SK-N-SH (cell line): ENCODE measurements at regions of chr16 and their contacts with region 1.

Region 1: GRCh38 chr16:27779641-27780164 is 229.8 kb downstream of the KATNIP start:
- DNase-seq: peak; percentile 93
- H3K4me3 ChIP-seq: no peak overlapping the region
- H3K27ac ChIP-seq: peak overlapping the region in 1 of 2 experiments; percentile 34; a peak in 2 of 4 replicates
- H3K4me1 ChIP-seq: peaks cover 0 to 37% of the 10 kb centered on the region in 2 experiments; a peak in 1 of 4 replicates
- H3K27me3 ChIP-seq: no peaks in the 10 kb centered on the region
- CTCF ChIP-seq: peak; percentile 54
- EP300 ChIP-seq: no peak
- RAD21 ChIP-seq: peak; percentile 75

Region 2: DNA sequence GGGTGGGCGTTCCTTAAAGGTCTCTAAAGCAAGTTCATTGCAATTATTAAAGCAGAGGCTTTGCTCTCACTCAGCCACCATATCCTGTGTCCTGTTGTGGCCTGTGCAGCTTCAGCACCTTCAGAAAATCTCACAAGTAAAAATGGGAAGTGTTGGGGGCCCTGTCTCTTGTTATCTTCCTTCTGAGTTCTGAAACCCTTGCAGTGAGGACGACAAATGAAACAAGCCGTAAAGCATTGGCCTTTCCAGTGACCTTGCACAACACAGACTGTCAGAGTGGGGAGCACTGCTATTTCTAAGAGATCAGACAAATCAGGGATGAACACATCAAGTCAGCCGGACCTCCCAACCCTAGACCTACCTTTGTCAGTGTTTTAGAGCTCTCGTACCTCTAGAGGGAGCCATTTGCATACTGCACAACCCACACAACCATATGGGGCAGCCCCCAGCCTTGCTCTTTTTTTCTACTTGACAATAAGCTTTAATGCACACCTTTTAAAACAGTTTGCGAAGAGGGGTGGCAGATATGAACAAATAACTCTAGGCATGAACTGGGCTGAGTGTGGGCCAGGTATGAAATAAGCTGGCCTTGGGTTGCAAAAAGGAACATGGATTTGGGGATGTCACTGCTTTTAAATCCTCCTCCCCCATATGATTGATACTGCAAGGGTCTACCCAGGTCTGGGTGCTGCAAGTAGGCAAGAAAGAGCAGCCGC is 140.0 kb before region 1 on chr16:
- CTCF ChIA-PET with region 1: interaction called, 25 read pairs
- POLR2A ChIA-PET with region 1: no interaction called
- DNase-seq: peak; percentile 83
- H3K4me3 ChIP-seq: no peak overlapping the region
- H3K27ac ChIP-seq: no peak overlapping the region
- H3K4me1 ChIP-seq: peaks cover 0 to 9% of the 10 kb centered on the region in 2 experiments; a peak in 1 of 4 replicates
- H3K27me3 ChIP-seq: no peaks in the 10 kb centered on the region
- CTCF ChIP-seq: peak; percentile 80
- EP300 ChIP-seq: no peak
- RAD21 ChIP-seq: peak; percentile 87

Region 3: DNA sequence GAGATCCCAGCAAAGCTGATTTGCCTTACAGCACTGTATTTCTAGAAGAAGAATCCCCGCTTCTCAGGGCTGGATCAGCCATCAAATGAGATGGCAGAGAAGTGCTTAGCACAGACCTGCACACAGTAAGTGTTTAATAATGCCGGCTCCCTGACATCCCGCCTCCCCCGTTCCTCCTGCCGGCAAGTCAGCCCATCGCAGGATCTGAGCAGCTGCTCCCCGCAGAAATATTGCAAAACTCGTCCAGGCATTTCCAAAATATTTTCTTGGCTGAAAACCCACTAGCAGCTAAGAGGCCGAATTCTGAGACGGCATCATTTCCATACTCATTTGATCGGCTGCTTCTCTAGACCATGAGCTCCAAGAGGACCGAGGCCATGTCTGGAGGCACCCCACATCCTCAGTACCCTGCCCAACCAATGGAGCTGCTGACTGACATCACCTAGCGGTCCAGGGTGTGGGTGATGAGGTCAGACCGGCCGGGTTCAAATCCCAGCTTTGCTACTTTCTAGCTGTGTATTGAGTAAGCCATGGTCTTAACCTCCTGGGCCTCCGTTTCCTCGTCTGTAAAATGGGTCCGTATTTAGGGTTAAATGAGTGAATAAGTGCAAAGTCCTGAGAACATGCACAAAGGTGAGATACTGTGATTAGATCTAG is 21.7 kb after region 1 on chr16:
- CTCF ChIA-PET with region 1: interaction called, 10 read pairs
- POLR2A ChIA-PET with region 1: no interaction called
- DNase-seq: no peak
- H3K4me3 ChIP-seq: no peak overlapping the region
- H3K27ac ChIP-seq: no peak overlapping the region
- H3K4me1 ChIP-seq: peaks cover 0 to 4% of the 10 kb centered on the region in 2 experiments; a peak in 1 of 4 replicates
- H3K27me3 ChIP-seq: no peaks in the 10 kb centered on the region
- CTCF ChIP-seq: no peak
- EP300 ChIP-seq: no peak
- RAD21 ChIP-seq: no peak

Region 4: GRCh38 chr16:27867122-27868110 is 87.7 kb after region 1 on chr16:
- CTCF ChIA-PET with region 1: interaction called, 14 read pairs
- POLR2A ChIA-PET with region 1: no interaction called
- DNase-seq: peak; percentile 92
- H3K4me3 ChIP-seq: no peak overlapping the region
- H3K27ac ChIP-seq: no peak overlapping the region
- H3K4me1 ChIP-seq: no peaks in the 10 kb centered on the region
- H3K27me3 ChIP-seq: no peaks in the 10 kb centered on the region
- CTCF ChIP-seq: peak; percentile 56
- EP300 ChIP-seq: no peak
- RAD21 ChIP-seq: peak; percentile 70

Region 5: GRCh38 chr16:28063641-28064061 is 283.9 kb after region 1 on chr16 and contains the start of gene GSG1L:
- CTCF ChIA-PET with region 1: interaction called, 11 read pairs
- POLR2A ChIA-PET with region 1: interaction called, 3 read pairs
- DNase-seq: peak; percentile 83
- H3K4me3 ChIP-seq: peak within 1 kb of the TSS in 1 of 2 experiments; percentile 31; a peak in 2 of 4 replicates
- H3K27ac ChIP-seq: no peak within 1 kb of the TSS
- H3K4me1 ChIP-seq: no peaks in the 10 kb centered on the region
- H3K27me3 ChIP-seq: peaks cover 34% of the 10 kb centered on the region
- CTCF ChIP-seq: no peak
- EP300 ChIP-seq: no peak
- RAD21 ChIP-seq: peak; percentile 28; the same call in 1 of the 2 replicates
- polyA plus RNA-seq, gene GSG1L: not detected in 2 replicates